CD8-positive, alpha-beta T cell (primary cell): ENCODE measurements at regions of chr19 and their contacts with region 1.

Region 1: DNA sequence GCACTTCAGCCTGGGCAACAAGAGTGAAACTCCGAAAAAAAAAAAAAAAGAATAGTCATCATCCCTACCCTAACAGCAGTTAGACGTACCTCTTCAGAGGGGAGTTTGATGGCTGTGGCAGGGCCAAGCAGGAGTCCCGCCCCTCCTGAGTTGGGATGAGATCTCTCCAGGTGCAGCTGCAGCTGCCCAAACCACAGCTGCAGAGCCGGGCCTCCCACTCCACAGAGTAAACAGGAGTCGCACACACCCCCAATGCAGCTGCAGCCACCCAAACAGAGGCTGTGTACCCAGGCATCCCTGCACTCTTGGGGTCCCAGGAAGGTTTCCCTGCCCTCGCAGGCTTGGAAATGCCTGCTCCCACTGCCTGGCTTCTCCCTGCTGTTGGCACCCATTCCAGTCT is 17.4 kb upstream of the MLLT1 start:
- DNase-seq: no peak
- ATAC-seq: no peak
- H3K4me3 ChIP-seq: no peak overlapping the region
- H3K4me3 Mint-ChIP-seq: no peak overlapping the region
- H3K27ac ChIP-seq: no peak overlapping the region
- H3K27ac Mint-ChIP-seq: no peak overlapping the region
- H3K4me1 ChIP-seq: no peaks in the 10 kb centered on the region
- H3K4me1 Mint-ChIP-seq: peaks cover 3% of the 10 kb centered on the region
- H3K27me3 ChIP-seq: peaks cover 0 to 2% of the 10 kb centered on the region in 2 experiments
- H3K27me3 Mint-ChIP-seq: peaks cover 2% of the 10 kb centered on the region
- CTCF ChIP-seq: no peak

Region 2: DNA sequence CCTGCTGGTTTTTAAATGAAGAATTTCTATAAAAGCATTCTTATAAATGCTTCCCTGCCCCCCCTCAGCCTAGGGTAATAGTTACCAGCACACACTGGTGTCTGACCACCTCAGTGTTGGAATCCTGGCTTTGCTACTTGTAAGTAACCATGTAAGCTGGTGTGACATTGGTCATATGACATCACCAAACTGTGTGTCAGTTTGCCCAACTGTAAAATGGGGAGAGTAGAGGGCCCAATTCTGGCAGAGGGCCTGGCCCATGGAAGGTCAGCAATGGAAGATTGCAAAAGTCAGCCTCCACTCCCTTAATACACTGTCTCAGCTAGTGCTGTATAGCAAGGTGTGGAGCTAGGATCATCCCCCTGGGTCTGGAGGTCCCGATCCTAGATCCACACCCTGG is 130.1 kb before region 1 on chr19:
- CTCF ChIA-PET with region 1: interaction called, 3 read pairs
- POLR2A ChIA-PET with region 1: no interaction called
- intact Hi-C with region 1: loop called in 1 of 2 experiments (anchors 2 kb)
- DNase-seq: no peak
- ATAC-seq: no peak
- H3K4me3 ChIP-seq: no peak overlapping the region
- H3K4me3 Mint-ChIP-seq: no peak overlapping the region
- H3K27ac ChIP-seq: no peak overlapping the region
- H3K27ac Mint-ChIP-seq: peak overlapping the region; percentile 64
- H3K4me1 ChIP-seq: peaks cover 6% of the 10 kb centered on the region
- H3K4me1 Mint-ChIP-seq: peaks cover 4% of the 10 kb centered on the region
- H3K27me3 ChIP-seq: no peaks in the 10 kb centered on the region
- H3K27me3 Mint-ChIP-seq: no peaks in the 10 kb centered on the region
- CTCF ChIP-seq: no peak

Region 3: DNA sequence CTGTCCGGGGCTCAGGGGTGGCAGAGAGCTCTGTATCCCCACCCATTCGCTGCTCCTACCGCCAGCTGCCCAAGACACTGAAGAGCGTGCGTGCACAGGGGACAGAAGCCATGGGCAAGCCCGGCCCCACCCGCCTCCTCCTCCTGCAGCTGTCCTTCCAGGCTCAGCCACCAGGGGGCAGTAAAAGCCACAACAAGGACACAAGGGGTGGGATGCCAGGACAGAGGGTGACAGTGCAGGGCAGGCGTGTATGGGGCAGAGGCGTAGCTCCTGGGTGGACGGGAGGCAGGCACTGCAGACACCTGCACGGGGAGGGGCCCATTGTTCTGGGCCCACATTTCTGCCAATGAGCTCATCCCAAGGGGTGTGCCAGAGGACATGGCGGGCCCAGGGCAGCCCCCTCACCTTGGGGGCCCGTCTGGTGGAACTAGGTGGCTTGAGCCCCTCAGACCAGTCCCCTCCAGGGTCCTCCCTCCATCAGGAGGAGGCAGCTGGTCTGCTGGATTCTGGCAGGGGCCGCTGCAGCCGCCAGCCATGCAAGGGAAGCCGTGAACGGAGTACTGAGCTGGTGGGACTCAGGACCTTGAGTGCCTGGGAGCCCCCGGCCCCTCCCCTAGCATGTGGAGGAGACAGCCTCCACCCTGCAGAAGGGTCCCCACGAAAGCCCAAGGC is 78.6 kb before region 1 on chr19:
- CTCF ChIA-PET with region 1: interaction called, 32 read pairs
- POLR2A ChIA-PET with region 1: no interaction called
- intact Hi-C with region 1: loop called in 1 of 2 experiments (anchors 1 kb)
- DNase-seq: peak; percentile 65 to 91 (median 80)
- ATAC-seq: peak; percentile 95
- H3K4me3 ChIP-seq: no peak overlapping the region
- H3K4me3 Mint-ChIP-seq: no peak overlapping the region
- H3K27ac ChIP-seq: no peak overlapping the region
- H3K27ac Mint-ChIP-seq: peak overlapping the region; percentile 67
- H3K4me1 ChIP-seq: no peaks in the 10 kb centered on the region
- H3K4me1 Mint-ChIP-seq: peaks cover 3% of the 10 kb centered on the region
- H3K27me3 ChIP-seq: no peaks in the 10 kb centered on the region
- H3K27me3 Mint-ChIP-seq: no peaks in the 10 kb centered on the region
- CTCF ChIP-seq: peak; percentile 93

Region 4: DNA sequence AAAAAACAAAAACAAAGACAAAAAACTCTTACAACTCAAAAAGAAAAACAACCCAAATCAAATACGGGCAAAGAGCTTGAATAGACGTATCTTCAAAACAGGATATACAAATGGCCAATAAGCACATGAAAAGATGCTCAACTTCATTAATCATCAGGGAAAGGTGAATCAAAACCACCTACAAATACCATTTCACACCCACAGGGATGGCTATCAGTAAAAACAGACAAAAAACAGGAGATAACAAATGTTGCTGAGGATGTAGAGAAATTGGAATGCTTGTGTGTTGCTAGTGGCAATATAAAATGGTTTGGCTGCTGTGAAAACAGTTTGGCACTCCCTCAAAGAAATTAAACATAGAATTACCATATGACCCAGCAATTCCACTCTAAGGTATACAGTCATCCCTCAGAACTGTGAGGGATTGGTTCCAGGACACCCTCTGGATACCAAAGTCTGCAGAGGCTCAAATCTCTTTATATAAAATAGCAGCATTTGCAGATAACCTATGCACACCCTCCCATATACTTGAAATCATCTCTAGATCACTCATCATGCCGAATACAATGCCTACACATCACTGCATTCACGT is 47.1 kb before region 1 on chr19:
- CTCF ChIA-PET with region 1: no interaction called
- POLR2A ChIA-PET with region 1: no interaction called
- intact Hi-C with region 1: loop called in 1 of 2 experiments (anchors 5 kb)
- DNase-seq: no peak
- ATAC-seq: no peak
- H3K4me3 ChIP-seq: no peak overlapping the region
- H3K4me3 Mint-ChIP-seq: no peak overlapping the region
- H3K27ac ChIP-seq: no peak overlapping the region
- H3K27ac Mint-ChIP-seq: no peak overlapping the region
- H3K4me1 ChIP-seq: no peaks in the 10 kb centered on the region
- H3K4me1 Mint-ChIP-seq: peaks cover 42% of the 10 kb centered on the region
- H3K27me3 ChIP-seq: no peaks in the 10 kb centered on the region
- H3K27me3 Mint-ChIP-seq: no peaks in the 10 kb centered on the region
- CTCF ChIP-seq: no peak

Region 5: GRCh38 chr19:6412447-6413091 is 115.4 kb after region 1 on chr19:
- CTCF ChIA-PET with region 1: no interaction called
- POLR2A ChIA-PET with region 1: no interaction called
- intact Hi-C with region 1: loop called in 1 of 2 experiments (anchors 1 kb)
- DNase-seq: peak in 8 of 9 experiments; percentile 19 to 68 (median 58)
- ATAC-seq: peak; percentile 88
- H3K4me3 ChIP-seq: no peak overlapping the region
- H3K4me3 Mint-ChIP-seq: no peak overlapping the region
- H3K27ac ChIP-seq: no peak overlapping the region
- H3K27ac Mint-ChIP-seq: no peak overlapping the region
- H3K4me1 ChIP-seq: no peaks in the 10 kb centered on the region
- H3K4me1 Mint-ChIP-seq: no peaks in the 10 kb centered on the region
- H3K27me3 ChIP-seq: no peaks in the 10 kb centered on the region
- H3K27me3 Mint-ChIP-seq: no peaks in the 10 kb centered on the region
- CTCF ChIP-seq: peak; percentile 64